Activated naive CD4-positive, alpha-beta T cell treated with anti-CD3 and anti-CD28 coated beads for 36 hours (primary cell): ENCODE measurements at regions of chr1 and their contacts with region 1.

Region 1: DNA sequence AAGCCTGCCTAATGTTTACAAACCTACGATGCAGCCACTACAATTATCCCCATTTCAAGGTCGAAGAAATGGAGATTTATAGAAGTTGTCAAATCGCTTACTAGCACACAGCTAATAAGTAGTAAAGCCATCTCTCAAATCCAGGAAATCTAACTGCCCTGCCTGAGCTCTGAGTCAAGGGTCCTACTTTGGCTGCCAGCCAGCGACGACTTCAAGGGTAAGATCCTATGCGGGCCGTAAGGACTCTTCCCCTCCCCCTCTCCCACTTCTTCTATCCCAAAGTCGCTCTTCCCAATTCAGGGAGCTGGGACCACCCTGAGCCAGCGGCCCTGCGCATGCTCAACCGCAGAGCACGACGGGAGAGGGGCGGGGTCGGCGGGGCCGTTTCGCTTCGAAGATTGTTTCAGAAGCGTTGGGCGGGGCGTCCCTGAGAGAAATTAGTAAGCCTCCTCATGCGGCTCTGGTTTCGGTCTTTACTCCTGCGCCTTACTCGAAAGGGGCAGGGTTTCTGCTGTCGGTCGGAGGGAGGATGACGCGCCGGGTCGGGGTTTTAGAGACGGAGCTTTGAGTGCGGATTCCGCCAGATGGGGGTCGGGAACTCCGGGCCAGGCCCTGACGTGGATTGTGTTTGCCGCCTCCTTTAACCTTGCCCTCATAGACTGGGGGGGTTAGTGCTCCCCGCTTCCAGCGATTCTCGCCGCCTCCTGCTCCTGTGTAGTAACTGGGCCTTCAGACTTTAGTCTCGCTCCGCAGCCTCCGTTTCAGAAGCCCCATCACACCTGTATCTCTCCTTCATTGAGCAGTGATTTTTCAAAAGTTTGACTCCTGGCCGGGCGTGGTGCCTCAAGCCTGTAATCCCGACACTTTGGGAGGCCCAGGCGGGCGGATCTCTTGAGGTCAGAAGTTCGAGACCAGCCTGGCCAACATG is at the start of gene ZMYM1:
- DNase-seq: peak; percentile 95
- H3K4me3 Mint-ChIP-seq: peak within 1 kb of the TSS; percentile 92
- H3K27ac Mint-ChIP-seq: peak within 1 kb of the TSS; percentile 97
- H3K4me1 Mint-ChIP-seq: peaks cover 32% of the 10 kb centered on the region
- H3K27me3 Mint-ChIP-seq: peaks cover 3% of the 10 kb centered on the region
- total RNA-seq, gene ZMYM1: 7.3 to 7.9 TPM

Region 2: DNA sequence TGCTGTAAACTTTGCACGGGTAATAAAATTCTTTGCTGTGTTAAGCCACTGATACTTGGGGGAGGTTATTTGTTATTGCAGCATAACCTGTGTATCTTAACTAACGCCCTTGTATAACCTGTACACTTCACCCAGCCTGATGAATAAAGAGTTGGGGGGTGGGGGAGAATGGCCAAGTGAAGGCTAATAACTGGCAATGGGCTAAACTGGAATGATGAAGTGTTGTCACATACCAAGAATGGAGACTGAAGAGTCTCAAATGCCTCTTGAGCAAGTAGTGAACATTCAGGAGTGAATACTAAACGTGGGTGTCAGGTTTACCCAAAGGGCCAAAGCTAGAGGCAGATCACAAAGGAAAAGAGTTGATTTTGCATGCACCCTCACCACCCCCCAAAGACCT is 733.1 kb before region 1 on chr1:
- CTCF ChIA-PET with region 1: no interaction called
- intact Hi-C with region 1: no loop called
- DNase-seq: no peak
- H3K4me3 Mint-ChIP-seq: no peak overlapping the region
- H3K27ac Mint-ChIP-seq: no peak overlapping the region
- H3K4me1 Mint-ChIP-seq: no peaks in the 10 kb centered on the region
- H3K27me3 Mint-ChIP-seq: peaks cover 3% of the 10 kb centered on the region

Region 3: DNA sequence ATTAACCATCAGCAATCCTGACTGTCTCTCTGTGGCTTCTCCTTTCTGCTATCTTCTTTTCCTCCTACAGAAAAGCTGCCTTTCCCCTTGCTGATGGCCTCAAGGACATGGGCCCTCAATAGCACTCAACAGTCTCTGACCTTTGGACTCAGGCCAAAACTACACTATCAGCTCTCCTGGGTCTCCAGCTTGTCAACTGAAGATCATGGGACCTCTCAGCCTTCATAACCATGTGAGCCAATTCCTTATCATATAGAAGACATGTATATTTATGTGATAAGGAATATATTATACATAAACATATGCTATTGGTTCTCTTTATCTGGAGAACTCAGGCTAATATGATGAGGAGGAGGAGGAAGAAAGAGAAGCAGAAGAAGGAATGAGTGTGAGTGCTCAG is 416.2 kb before region 1 on chr1:
- CTCF ChIA-PET with region 1: no interaction called
- intact Hi-C with region 1: no loop called
- DNase-seq: no peak
- H3K4me3 Mint-ChIP-seq: no peak overlapping the region
- H3K27ac Mint-ChIP-seq: no peak overlapping the region
- H3K4me1 Mint-ChIP-seq: no peaks in the 10 kb centered on the region
- H3K27me3 Mint-ChIP-seq: peaks cover 13% of the 10 kb centered on the region

Region 4: GRCh38 chr1:34859446-34860200 is 219.6 kb before region 1 on chr1 and contains the start of gene SMIM12:
- CTCF ChIA-PET with region 1: interaction called, 4 read pairs
- intact Hi-C with region 1: loop called (anchors 2 kb)
- DNase-seq: peak; percentile 96
- H3K4me3 Mint-ChIP-seq: peak within 1 kb of the TSS; percentile 98
- H3K27ac Mint-ChIP-seq: peak within 1 kb of the TSS; percentile 94
- H3K4me1 Mint-ChIP-seq: peaks cover 53% of the 10 kb centered on the region
- H3K27me3 Mint-ChIP-seq: no peaks in the 10 kb centered on the region
- total RNA-seq, gene SMIM12: 37.6 to 38.6 TPM

Region 5: DNA sequence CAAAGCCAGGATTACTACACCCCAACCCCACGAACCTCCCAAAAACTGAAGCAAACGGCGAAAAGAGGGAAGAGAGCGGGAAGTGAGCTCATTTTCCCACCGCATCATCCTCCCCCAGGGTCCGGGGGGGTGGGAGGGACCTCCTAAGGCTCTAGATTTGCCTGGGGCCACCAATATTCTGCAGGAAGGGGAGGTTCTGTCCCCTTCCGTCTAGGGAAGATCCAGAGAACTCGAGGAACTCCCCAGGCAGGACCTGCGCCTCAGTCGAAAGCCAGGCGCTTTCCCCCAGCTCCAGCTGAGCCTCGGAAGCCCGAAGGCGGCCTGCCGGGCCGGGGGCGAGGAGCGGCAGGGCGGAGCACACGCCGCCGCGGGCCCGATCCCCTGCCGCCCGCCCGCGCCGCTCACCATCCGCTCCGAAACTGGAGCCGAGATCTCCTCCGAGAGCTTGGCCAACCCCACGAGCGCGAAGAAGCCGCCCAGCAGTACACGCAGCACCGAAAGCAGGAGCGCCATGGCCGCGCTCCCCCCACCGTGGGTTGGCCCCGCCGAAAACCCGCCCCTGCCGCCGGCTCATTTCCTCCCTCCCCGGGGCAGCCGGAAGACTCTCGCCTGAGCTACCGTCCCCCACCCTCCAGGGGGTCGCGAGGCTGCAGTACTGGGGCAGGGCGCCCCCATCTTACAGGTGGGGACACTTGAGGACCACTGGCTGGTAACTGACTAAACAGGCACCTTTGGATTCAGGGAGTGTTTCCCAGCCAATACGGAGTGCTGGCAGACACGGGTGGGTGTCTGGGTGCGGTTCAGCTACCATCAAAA is 94.3 kb before region 1 on chr1 and contains the start of gene TMEM35B:
- CTCF ChIA-PET with region 1: interaction called, 6 read pairs
- intact Hi-C with region 1: loop called (anchors 2 kb)
- DNase-seq: peak; percentile 81
- H3K4me3 Mint-ChIP-seq: peak within 1 kb of the TSS; percentile 97
- H3K27ac Mint-ChIP-seq: peak within 1 kb of the TSS; percentile 93
- H3K4me1 Mint-ChIP-seq: peaks cover 49% of the 10 kb centered on the region
- H3K27me3 Mint-ChIP-seq: no peaks in the 10 kb centered on the region
- total RNA-seq, gene TMEM35B: 18.2 to 19.9 TPM

Region 6: DNA sequence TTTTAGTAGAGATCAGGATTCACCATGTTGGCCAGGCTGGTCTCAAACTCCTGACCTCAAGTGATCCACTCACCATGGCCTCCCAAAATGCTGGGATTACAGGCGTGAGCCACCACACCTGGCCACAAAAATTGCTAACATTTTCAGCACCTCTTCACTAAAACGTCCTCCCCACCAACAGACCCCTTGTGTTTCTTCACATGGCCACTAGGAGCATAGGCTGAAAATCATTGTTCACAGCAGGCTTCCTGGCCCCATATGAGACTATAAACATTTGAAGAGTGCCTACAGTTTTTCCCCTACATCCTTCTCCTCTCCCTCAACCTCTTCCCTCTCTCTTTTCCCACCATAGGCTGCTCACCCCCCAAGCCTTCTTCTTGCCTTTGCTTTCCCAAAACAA is 141.7 kb after region 1 on chr1:
- CTCF ChIA-PET with region 1: no interaction called
- intact Hi-C with region 1: no loop called
- DNase-seq: peak; percentile 7
- H3K4me3 Mint-ChIP-seq: no peak overlapping the region
- H3K27ac Mint-ChIP-seq: no peak overlapping the region
- H3K4me1 Mint-ChIP-seq: no peaks in the 10 kb centered on the region
- H3K27me3 Mint-ChIP-seq: no peaks in the 10 kb centered on the region

Region 7: GRCh38 chr1:35264871-35265270 is 185.6 kb after region 1 on chr1:
- CTCF ChIA-PET with region 1: no interaction called
- intact Hi-C with region 1: no loop called
- DNase-seq: no peak
- H3K4me3 Mint-ChIP-seq: no peak overlapping the region
- H3K27ac Mint-ChIP-seq: no peak overlapping the region
- H3K4me1 Mint-ChIP-seq: peaks cover 10% of the 10 kb centered on the region
- H3K27me3 Mint-ChIP-seq: peaks cover 5% of the 10 kb centered on the region